Activated naive CD4-positive, alpha-beta T cell treated with anti-CD3 and anti-CD28 coated beads for 36 hours (primary cell): ENCODE measurements at regions of chr3 and their contacts with region 1.

Region 1: GRCh38 chr3:23324745-23325144 is 121.6 kb downstream of the UBE2E2 start:
- DNase-seq: no peak
- H3K4me3 Mint-ChIP-seq: no peak overlapping the region
- H3K27ac Mint-ChIP-seq: no peak overlapping the region
- H3K4me1 Mint-ChIP-seq: peaks cover 34% of the 10 kb centered on the region
- H3K27me3 Mint-ChIP-seq: no peaks in the 10 kb centered on the region

Region 2: DNA sequence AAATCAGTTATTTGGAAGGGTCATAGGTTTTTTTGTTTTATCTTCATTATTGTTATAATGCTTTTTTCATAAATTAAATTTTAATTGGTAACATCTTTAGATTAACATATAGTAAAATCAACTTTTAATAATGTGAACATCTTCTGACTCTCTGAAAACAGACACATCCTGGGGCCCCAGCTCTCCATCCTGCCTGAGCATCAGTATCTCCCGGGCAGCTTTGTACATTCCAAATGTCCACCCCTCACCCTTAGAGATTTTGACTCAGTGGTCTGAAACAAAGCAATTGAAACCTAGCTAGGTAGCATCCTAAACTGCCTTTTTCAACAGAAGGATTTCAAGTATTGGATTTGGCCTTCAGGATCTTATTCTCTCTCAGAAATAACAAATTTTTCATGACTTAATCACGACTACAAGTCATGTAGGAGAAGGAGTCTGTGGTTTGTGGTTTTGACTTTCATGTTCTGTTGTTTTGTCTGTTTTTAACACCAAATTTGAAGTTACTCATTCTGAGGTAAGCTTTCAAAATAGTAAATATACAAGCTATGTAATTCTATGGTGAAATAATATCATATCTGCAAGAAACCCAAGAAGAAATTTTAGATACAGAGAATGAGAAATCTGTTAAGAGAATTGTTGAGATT is 268.9 kb before region 1 on chr3:
- CTCF ChIA-PET with region 1: no interaction called
- intact Hi-C with region 1: loop called (anchors 10 kb)
- DNase-seq: no peak
- H3K4me3 Mint-ChIP-seq: no peak overlapping the region
- H3K27ac Mint-ChIP-seq: no peak overlapping the region
- H3K4me1 Mint-ChIP-seq: peaks cover 12% of the 10 kb centered on the region
- H3K27me3 Mint-ChIP-seq: no peaks in the 10 kb centered on the region